CD4-positive, alpha-beta memory T cell (primary cell): ENCODE measurements at regions of chr1 and their contacts with region 1.

Region 1: GRCh38 chr1:175154629-175155472 is 37.7 kb downstream of the KIAA0040 start:
- DNase-seq: peak; percentile 60 to 70 (median 66)
- H3K4me3 ChIP-seq: no peak overlapping the region
- H3K4me3 Mint-ChIP-seq: no peak overlapping the region
- H3K27ac ChIP-seq: no peak overlapping the region
- H3K27ac Mint-ChIP-seq: no peak overlapping the region
- H3K4me1 ChIP-seq: peaks cover 13% of the 10 kb centered on the region
- H3K4me1 Mint-ChIP-seq: peaks cover 12 to 23% (median 17%) of the 10 kb centered on the region in 4 donors
- H3K27me3 ChIP-seq: no peaks in the 10 kb centered on the region
- H3K27me3 Mint-ChIP-seq: peaks cover 25 to 26% of the 10 kb centered on the region in 2 donors

Region 2: DNA sequence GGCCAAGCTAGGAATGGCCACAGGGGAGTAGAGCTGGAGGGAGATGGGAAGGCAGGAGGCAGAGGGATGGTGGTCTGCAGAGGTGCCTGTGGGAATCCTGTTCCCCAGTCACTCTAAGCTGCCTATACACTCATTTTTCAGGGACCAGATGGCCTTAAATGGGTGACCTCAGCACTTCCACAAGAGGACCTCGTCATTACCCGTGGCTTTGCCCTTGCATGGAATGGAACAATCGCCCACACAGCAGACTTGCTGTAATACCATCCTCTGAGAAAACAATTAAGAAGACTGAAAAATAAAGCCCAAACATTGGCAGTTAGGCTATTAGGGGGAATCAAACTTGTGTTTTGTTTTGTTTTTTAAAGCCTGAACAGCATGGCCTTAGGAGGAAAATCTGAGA is 100.1 kb before region 1 on chr1:
- CTCF ChIA-PET with region 1: no interaction called
- POLR2A ChIA-PET with region 1: no interaction called
- intact Hi-C with region 1: no loop called
- DNase-seq: no peak
- H3K4me3 ChIP-seq: no peak overlapping the region
- H3K4me3 Mint-ChIP-seq: no peak overlapping the region
- H3K27ac ChIP-seq: no peak overlapping the region
- H3K27ac Mint-ChIP-seq: no peak overlapping the region
- H3K4me1 ChIP-seq: no peaks in the 10 kb centered on the region
- H3K4me1 Mint-ChIP-seq: no peaks in the 10 kb centered on the region
- H3K27me3 ChIP-seq: peaks cover 11% of the 10 kb centered on the region
- H3K27me3 Mint-ChIP-seq: peaks cover 9 to 26% of the 10 kb centered on the region in 2 donors

Region 3: DNA sequence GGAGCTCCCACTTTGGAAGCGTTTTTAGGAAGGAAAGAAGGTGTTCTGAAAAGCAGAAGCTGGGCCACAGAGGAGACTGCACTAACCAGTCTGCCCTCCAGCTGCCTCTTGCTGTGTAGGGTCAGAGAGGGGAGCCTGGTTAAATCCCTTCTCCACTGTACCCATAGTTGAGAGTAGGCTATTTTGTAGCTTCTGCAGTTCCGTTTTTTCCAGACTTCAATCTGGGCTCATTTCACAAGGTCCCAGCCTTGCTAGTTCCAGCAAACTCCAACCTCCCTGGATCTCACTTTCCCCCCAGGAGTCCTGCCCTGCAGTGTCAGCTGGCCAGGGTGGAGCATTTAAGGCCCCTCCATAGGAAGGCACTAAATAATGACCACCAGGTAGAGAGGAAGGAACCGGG is 76.2 kb before region 1 on chr1:
- CTCF ChIA-PET with region 1: no interaction called
- POLR2A ChIA-PET with region 1: no interaction called
- intact Hi-C with region 1: no loop called
- DNase-seq: no peak
- H3K4me3 ChIP-seq: no peak overlapping the region
- H3K4me3 Mint-ChIP-seq: no peak overlapping the region
- H3K27ac ChIP-seq: no peak overlapping the region
- H3K27ac Mint-ChIP-seq: no peak overlapping the region
- H3K4me1 ChIP-seq: no peaks in the 10 kb centered on the region
- H3K4me1 Mint-ChIP-seq: no peaks in the 10 kb centered on the region
- H3K27me3 ChIP-seq: no peaks in the 10 kb centered on the region
- H3K27me3 Mint-ChIP-seq: peaks cover 11 to 13% of the 10 kb centered on the region in 2 donors

Region 4: DNA sequence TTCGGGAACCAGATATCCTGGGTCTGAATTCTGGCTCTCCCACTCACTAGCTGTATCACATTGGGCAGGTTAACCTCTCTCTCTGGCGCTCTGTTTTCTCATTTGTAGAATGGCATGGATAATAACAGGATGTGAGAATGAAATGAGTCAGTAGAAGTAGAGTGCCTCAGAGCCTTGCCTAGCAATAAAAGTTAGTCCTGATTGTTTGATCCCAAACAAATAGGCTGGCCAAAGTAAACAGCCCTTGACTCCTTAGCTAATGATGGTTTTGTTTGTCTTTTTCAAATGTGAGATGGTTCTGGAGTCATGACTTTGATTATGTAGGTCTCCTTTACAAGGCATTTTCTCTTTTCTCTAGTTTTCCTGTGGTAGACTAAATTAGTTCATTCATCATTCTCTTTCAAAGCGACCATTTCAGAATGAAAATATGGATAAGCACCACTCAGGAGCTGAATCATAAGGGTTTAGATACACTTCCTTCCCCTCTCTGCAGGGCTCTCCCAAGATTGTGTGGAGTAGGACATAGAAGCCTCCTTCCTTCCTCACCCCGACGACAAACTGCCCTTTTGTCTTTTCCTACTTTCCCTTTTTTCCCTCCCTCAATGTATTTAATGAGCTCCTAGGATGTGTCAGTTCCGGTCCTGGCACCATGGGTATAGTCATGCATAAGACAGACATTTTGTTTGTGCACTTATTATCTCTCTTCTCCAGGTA is 14.6 kb after region 1 on chr1:
- CTCF ChIA-PET with region 1: interaction called, 27 read pairs
- POLR2A ChIA-PET with region 1: interaction called, 3 read pairs
- intact Hi-C with region 1: no loop called
- DNase-seq: no peak
- H3K4me3 ChIP-seq: no peak overlapping the region
- H3K4me3 Mint-ChIP-seq: no peak overlapping the region
- H3K27ac ChIP-seq: no peak overlapping the region
- H3K27ac Mint-ChIP-seq: peak overlapping the region; percentile 37 to 85 (median 71)
- H3K4me1 ChIP-seq: peaks cover 30% of the 10 kb centered on the region
- H3K4me1 Mint-ChIP-seq: peaks cover 50 to 76% (median 60%) of the 10 kb centered on the region in 4 donors
- H3K27me3 ChIP-seq: no peaks in the 10 kb centered on the region
- H3K27me3 Mint-ChIP-seq: no peaks in the 10 kb centered on the region

Region 5: GRCh38 chr1:175208773-175209492 is 54.1 kb after region 1 on chr1:
- CTCF ChIA-PET with region 1: interaction called, 50 read pairs
- POLR2A ChIA-PET with region 1: interaction called, 5 read pairs
- intact Hi-C with region 1: loop called (anchors 1 kb)
- DNase-seq: peak; percentile 76 to 83 (median 80)
- H3K4me3 ChIP-seq: peak overlapping the region in 1 of 2 donors; percentile 8
- H3K4me3 Mint-ChIP-seq: peak overlapping the region; percentile 80 to 93 (median 90)
- H3K27ac ChIP-seq: peak overlapping the region; percentile 55
- H3K27ac Mint-ChIP-seq: peak overlapping the region; percentile 90 to 98 (median 96)
- H3K4me1 ChIP-seq: peaks cover 73% of the 10 kb centered on the region
- H3K4me1 Mint-ChIP-seq: peaks cover 59 to 84% (median 71%) of the 10 kb centered on the region in 4 donors
- H3K27me3 ChIP-seq: no peaks in the 10 kb centered on the region
- H3K27me3 Mint-ChIP-seq: no peaks in the 10 kb centered on the region

Region 6: GRCh38 chr1:175297291-175297690 is 142.4 kb after region 1 on chr1:
- CTCF ChIA-PET with region 1: interaction called, 16 read pairs
- POLR2A ChIA-PET with region 1: no interaction called
- intact Hi-C with region 1: no loop called
- DNase-seq: peak in 4 of 5 donors; percentile 41 to 57 (median 50)
- H3K4me3 ChIP-seq: no peak overlapping the region
- H3K4me3 Mint-ChIP-seq: peak overlapping the region in 2 of 8 donors; percentile 11 to 52
- H3K27ac ChIP-seq: no peak overlapping the region
- H3K27ac Mint-ChIP-seq: no peak overlapping the region
- H3K4me1 ChIP-seq: peaks cover 39% of the 10 kb centered on the region
- H3K4me1 Mint-ChIP-seq: peaks cover 23 to 46% (median 33%) of the 10 kb centered on the region in 4 donors
- H3K27me3 ChIP-seq: no peaks in the 10 kb centered on the region
- H3K27me3 Mint-ChIP-seq: peaks cover 4 to 8% of the 10 kb centered on the region in 2 donors

Region 7: DNA sequence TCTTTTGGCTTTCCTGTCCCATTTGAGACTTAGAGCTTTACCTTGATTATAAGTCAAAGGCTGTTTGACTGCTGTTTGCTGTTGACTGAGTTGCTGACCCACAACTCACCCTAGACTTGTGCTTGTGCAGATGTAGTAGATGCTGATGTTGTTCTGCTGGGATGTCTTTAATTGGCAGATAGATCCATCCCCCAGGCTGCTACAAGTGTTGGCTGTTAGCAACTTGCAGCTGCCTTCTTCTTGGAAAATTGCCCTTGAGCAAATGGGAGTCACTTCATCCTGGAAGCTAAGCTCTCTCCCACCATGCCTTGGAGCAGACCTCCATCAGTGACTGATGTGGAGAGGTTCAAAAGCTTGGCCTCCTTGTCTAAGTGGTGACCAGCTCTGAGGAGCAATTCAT is 177.0 kb after region 1 on chr1:
- CTCF ChIA-PET with region 1: interaction called, 27 read pairs
- POLR2A ChIA-PET with region 1: no interaction called
- intact Hi-C with region 1: no loop called
- DNase-seq: no peak
- H3K4me3 ChIP-seq: no peak overlapping the region
- H3K4me3 Mint-ChIP-seq: no peak overlapping the region
- H3K27ac ChIP-seq: no peak overlapping the region
- H3K27ac Mint-ChIP-seq: no peak overlapping the region
- H3K4me1 ChIP-seq: no peaks in the 10 kb centered on the region
- H3K4me1 Mint-ChIP-seq: no peaks in the 10 kb centered on the region
- H3K27me3 ChIP-seq: no peaks in the 10 kb centered on the region
- H3K27me3 Mint-ChIP-seq: peaks cover 6 to 11% of the 10 kb centered on the region in 2 donors

Region 8: GRCh38 chr1:176073524-176074157 is 918.8 kb after region 1 on chr1:
- CTCF ChIA-PET with region 1: interaction called, 5 read pairs
- POLR2A ChIA-PET with region 1: no interaction called
- intact Hi-C with region 1: loop called (anchors 1 kb)
- DNase-seq: peak in 4 of 5 donors; percentile 26 to 34 (median 31)
- H3K4me3 ChIP-seq: no peak overlapping the region
- H3K4me3 Mint-ChIP-seq: no peak overlapping the region
- H3K27ac ChIP-seq: no peak overlapping the region
- H3K27ac Mint-ChIP-seq: peak overlapping the region in 2 of 7 donors; percentile 1 to 22
- H3K4me1 ChIP-seq: no peaks in the 10 kb centered on the region
- H3K4me1 Mint-ChIP-seq: peaks cover 0 to 15% (median 12%) of the 10 kb centered on the region in 4 donors
- H3K27me3 ChIP-seq: no peaks in the 10 kb centered on the region
- H3K27me3 Mint-ChIP-seq: no peaks in the 10 kb centered on the region